ENCODE measurements at regions of chr5 and their contacts with region 1.

Region 1: GRCh38 chr5:163437309-163438182 is at the start of gene CCNG1:
- DNase-seq: peak; percentile 83
- ATAC-seq: peak; percentile 98
- H3K4me3 Mint-ChIP-seq: peak within 1 kb of the TSS; percentile 94
- H3K27ac Mint-ChIP-seq: peak within 1 kb of the TSS; percentile 85
- H3K4me1 Mint-ChIP-seq: peaks cover 36% of the 10 kb centered on the region
- H3K27me3 Mint-ChIP-seq: peaks cover 9% of the 10 kb centered on the region
- total RNA-seq, gene CCNG1: 138 to 144 TPM

Region 2: DNA sequence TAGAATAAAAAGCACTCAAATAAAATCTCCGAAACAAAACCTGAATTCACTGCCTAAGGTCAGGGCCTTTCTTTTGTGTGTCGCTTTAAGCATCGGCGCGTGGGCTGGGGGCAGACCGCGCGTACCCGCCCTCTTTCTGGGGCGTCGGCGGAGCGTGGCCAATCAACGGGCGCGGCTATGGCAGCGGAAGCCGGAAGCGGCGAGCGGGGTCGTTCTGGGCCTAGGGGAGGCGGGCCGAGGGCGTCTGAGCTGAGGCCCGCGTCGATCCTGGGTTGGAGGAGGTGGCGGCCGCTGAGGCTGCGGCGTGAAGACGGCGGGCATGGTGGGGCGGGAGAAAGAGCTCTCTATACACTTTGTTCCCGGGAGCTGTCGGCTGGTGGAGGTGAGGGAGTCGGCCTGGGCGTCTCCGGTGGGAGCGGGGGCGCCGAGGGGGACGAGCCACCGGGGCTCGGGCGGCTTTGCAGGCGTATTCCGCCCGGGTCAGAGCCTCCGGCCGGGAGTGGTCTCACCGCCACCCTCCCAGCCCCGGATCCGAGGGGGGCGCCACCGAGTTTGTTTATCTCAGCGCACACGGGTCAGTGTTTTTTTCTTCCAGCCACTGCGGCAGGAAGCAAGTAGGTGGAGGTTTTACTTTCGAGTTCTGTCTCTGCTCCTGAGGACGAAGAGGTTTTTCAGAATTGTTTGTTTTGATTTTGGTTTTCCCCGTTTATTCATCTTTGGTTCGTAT is 68.0 kb after region 1 on chr5 and contains the start of gene MAT2B:
- POLR2A ChIA-PET with region 1: interaction called, 10 read pairs
- DNase-seq: peak; percentile 95
- ATAC-seq: peak; percentile 93
- H3K4me3 Mint-ChIP-seq: peak within 1 kb of the TSS; percentile 95
- H3K27ac Mint-ChIP-seq: peak within 1 kb of the TSS; percentile 97
- H3K4me1 Mint-ChIP-seq: peaks cover 29% of the 10 kb centered on the region
- H3K27me3 Mint-ChIP-seq: no peaks in the 10 kb centered on the region
- total RNA-seq, gene MAT2B: 98.7 to 101 TPM

Region 3: DNA sequence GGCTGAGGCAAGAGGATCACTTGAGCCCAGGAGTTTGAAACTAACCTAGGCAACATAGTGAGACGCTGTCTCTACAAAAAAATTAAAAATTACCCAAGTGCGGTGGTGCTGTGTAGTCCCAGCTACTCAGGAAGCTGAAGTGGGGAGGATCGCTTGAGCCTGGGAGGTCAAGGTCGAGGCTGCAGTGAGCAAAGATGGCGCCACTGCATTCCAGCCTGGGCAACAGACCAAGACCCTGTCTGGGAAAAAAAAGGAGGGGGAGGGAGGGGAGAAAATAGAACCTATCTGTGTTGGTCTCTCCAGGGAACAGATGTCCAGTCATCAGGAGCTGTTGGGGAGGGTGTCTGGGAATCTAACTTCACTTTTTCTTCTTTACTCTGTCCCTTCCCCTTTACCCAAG is 92.2 kb after region 1 on chr5:
- POLR2A ChIA-PET with region 1: no interaction called
- DNase-seq: no peak
- ATAC-seq: no peak
- H3K4me3 Mint-ChIP-seq: no peak overlapping the region
- H3K27ac Mint-ChIP-seq: no peak overlapping the region
- H3K4me1 Mint-ChIP-seq: peaks cover 3% of the 10 kb centered on the region
- H3K27me3 Mint-ChIP-seq: peaks cover 3% of the 10 kb centered on the region

Measured in activated naive CD8-positive, alpha-beta T cell treated with anti-CD3 and anti-CD28 coated beads, Interleukin-2, amount 10 ng/mL, durations not matched to agents 7 days and 5 days (primary cell).